ENCODE measurements at regions of chr6 and their contacts with region 1.

Region 1: DNA sequence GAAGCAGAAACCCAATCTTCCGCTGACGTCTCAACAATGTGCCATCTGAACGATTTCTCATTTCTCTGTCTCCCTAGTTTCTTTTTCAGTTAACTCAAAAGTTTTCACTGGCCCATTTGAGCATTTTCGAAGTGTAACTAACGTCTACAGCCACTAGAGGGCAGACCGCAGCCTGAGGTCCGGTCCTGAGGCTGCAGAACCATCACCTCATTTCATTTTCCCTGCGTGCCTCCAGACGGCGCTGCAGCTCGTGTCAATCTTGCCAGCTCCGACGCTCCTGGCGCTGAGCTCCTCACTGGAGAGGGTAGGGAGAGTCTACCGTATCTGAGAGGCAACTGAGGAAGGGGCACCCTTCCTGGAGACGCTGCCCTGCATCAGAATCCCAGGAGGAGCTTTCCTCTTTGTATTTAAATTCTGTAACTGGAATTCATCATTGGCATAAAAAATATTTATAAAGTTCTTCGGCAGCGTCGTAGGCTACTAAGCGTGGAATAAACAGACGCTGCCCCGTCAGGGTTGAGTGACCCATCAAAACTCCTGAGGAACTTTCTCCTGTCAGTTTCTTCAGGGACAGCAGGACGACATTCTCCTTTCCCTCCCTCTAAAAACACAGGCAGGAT is 28.5 kb upstream of the DTNBP1 start:
- DNase-seq: peak; percentile 94
- H3K4me3 ChIP-seq: peak overlapping the region; percentile 20 to 50 (median 41)
- H3K27ac ChIP-seq: peak overlapping the region in 2 of 4 donors; percentile 22 to 25
- H3K4me1 ChIP-seq: peaks cover 0 to 11% (median 4%) of the 10 kb centered on the region in 4 donors
- H3K27me3 ChIP-seq: no peaks in the 10 kb centered on the region
- CTCF ChIP-seq: peak; percentile 97 to 100 (median 99)
- EP300 ChIP-seq: no peak
- POLR2A ChIP-seq: no peak

Region 2: DNA sequence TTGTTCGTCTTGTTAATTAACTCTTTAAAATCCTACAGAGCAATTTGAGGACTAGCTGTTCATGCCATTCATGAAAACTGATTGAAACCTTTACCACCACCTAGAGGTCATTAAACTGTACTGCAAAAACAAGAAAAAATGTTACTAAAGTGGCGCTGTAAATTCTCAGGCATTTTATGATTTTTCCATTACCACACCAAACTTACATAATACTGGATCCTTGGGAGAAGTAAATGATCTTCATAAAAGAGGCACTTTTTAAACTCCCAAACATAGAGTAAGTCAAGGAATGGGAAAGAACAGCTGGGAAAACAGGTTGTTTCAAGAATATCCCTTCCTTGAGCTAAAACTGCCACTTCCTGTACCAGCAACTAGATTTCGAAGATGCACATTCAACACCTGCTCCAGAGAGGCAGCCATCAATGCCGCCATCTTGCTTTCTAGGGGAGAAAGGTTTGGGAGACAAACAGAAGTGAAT is 491.9 kb after region 1 on chr6:
- intact Hi-C with region 1: loop called (anchors 1 kb)
- DNase-seq: no peak
- H3K4me3 ChIP-seq: no peak overlapping the region
- H3K27ac ChIP-seq: peak overlapping the region in 1 of 4 donors; percentile 38
- H3K4me1 ChIP-seq: peaks cover 0 to 12% (median 4%) of the 10 kb centered on the region in 4 donors
- H3K27me3 ChIP-seq: no peaks in the 10 kb centered on the region
- CTCF ChIP-seq: peak; percentile 23 to 79 (median 64)
- EP300 ChIP-seq: no peak
- POLR2A ChIP-seq: no peak

Region 3: GRCh38 chr6:16206595-16207037 is 515.3 kb after region 1 on chr6:
- intact Hi-C with region 1: loop called (anchors 1 kb)
- DNase-seq: no peak
- H3K4me3 ChIP-seq: no peak overlapping the region
- H3K27ac ChIP-seq: no peak overlapping the region
- H3K4me1 ChIP-seq: no peaks in the 10 kb centered on the region
- H3K27me3 ChIP-seq: no peaks in the 10 kb centered on the region
- CTCF ChIP-seq: peak; percentile 71 to 97 (median 94)
- EP300 ChIP-seq: no peak
- POLR2A ChIP-seq: no peak

Measured in sigmoid colon (tissue), 7 donors.